ENCODE measurements at regions of chr11 and their contacts with region 1.

Region 1: GRCh38 chr11:118240999-118241768 is 11.0 kb downstream of the MPZL3 start:
- DNase-seq: peak; percentile 97 to 99 (median 97)
- H3K4me3 ChIP-seq: peak overlapping the region in 4 of 7 experiments; percentile 9 to 58 (median 42)
- H3K27ac ChIP-seq: peak overlapping the region; percentile 85
- H3K4me1 ChIP-seq: peaks cover 46 to 71% (median 56%) of the 10 kb centered on the region in 4 experiments
- H3K27me3 ChIP-seq: no peaks in the 10 kb centered on the region

Region 2: GRCh38 chr11:118251858-118252652 is 10.9 kb after region 1 on chr11 and contains the start of gene MPZL3:
- CTCF ChIA-PET with region 1: interaction called, 12 read pairs
- POLR2A ChIA-PET with region 1: interaction called, 3 read pairs
- DNase-seq: peak; percentile 86 to 92 (median 91)
- H3K4me3 ChIP-seq: peak within 1 kb of the TSS; percentile 66 to 99 (median 96)
- H3K27ac ChIP-seq: peak within 1 kb of the TSS; percentile 97
- H3K4me1 ChIP-seq: peaks cover 2 to 19% (median 11%) of the 10 kb centered on the region in 4 experiments
- H3K27me3 ChIP-seq: no peaks in the 10 kb centered on the region

Region 3: DNA sequence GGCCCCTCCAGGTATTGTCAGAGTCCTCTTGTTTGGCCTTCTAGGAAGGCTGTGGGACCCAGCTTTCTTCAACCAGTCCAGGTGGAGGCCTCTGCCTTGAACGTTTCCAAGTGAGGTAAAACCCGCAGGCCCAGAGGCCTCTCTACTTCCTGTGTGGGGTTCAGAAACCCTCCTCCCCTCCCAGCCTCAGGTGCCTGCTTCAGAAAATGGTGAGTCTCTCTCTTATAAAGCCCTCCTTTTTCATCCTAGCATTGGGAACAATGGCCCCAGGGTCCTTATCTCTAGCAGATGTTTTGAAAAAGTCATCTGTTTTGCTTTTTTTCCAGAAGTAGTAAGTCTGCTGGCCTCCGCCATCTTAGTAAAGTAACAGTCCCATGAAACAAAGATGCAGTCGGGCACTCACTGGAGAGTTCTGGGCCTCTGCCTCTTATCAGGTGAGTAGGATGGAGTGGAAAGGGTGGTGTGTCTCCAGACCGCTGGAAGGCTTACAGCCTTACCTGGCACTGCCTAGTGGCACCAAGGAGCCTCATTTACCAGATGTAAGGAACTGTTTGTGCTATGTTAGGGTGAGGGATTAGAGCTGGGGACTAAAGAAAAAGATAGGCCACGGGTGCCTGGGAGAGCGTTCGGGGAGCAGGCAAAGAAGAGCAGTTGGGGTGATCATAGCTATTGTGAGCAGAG is 63.5 kb after region 1 on chr11 and contains the start of gene CD3E:
- CTCF ChIA-PET with region 1: no interaction called
- POLR2A ChIA-PET with region 1: no interaction called
- DNase-seq: no peak
- H3K4me3 ChIP-seq: peak within 1 kb of the TSS in 1 of 7 experiments; percentile 8
- H3K27ac ChIP-seq: peak within 1 kb of the TSS in 1 of 2 experiments; percentile 32
- H3K4me1 ChIP-seq: peaks cover 0 to 30% (median 14%) of the 10 kb centered on the region in 4 experiments
- H3K27me3 ChIP-seq: no peaks in the 10 kb centered on the region

Measured in common myeloid progenitor, CD34-positive (primary cell).